A549 (cell line): ENCODE measurements at regions of chr2 and their contacts with region 1.

Region 1: GRCh38 chr2:180980106-180980942 is at the start of gene UBE2E3:
- DNase-seq: peak; percentile 63 to 77
- ATAC-seq: peak; percentile 92 to 95
- H3K4me3 ChIP-seq: peak within 1 kb of the TSS; percentile 91
- H3K27ac ChIP-seq: peak within 1 kb of the TSS; percentile 93 to 94
- H3K4me1 ChIP-seq: peaks cover 30% of the 10 kb centered on the region
- CTCF ChIP-seq: peak; percentile 75
- EP300 ChIP-seq: no peak
- POLR2A ChIP-seq: peak; percentile 42
- RAD21 ChIP-seq: peak; percentile 41 to 62
- polyA plus RNA-seq, gene UBE2E3: 70.6 and 104 TPM in 2 replicates

Region 2: DNA sequence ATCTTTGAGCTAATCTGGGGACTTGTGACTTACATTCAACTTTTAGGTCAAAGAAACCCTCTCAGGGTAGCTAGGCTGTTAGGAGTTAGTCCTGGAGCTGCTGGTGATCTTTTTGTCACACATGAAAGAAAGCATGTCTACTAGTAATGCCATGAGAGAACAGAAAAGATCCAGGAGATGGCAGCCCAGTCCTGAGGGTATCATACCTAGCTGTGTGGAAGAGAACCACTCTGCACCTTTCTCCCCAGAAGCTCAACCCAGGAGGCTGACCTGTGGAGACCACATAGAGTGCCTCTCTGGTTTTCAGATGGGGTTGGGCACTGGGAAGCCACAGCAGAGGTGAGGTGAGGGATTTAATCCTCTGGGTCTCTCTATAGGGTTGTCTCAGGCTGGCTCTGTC is 460.1 kb before region 1 on chr2:
- CTCF ChIA-PET with region 1: interaction called, 8 read pairs
- POLR2A ChIA-PET with region 1: interaction called, 10 read pairs
- DNase-seq: peak in 1 of 2 experiments; percentile 22
- ATAC-seq: peak; percentile 72 to 78; a peak in 5 of 6 replicates
- H3K4me3 ChIP-seq: no peak overlapping the region
- H3K27ac ChIP-seq: peak overlapping the region in 1 of 2 experiments; percentile 62; a peak in 3 of 6 replicates
- H3K4me1 ChIP-seq: peaks cover 48% of the 10 kb centered on the region
- CTCF ChIP-seq: 0 out of 3 replicates have a peak, but pooled peaks have one; percentile 16
- EP300 ChIP-seq: no peak
- POLR2A ChIP-seq: no peak
- RAD21 ChIP-seq: peak in 1 of 2 experiments; percentile 41

Region 3: DNA sequence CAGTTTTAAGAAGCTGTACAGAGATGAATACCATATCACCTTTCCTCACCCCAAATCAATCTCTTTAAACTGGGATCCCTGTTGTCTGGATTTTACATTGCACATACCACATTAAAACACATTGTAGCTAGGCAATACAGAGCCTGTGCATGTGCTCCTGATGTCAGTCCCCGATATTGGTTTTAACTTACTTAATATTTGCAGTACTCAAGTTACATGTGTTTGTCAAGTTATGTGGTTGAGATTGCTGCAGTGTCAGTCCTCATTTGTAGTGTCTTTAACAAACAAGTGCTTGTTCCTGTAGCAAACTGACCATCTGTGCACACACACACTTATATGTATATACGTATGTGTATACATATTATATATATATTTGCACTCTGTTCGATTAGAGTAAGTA is 10.3 kb before region 1 on chr2:
- CTCF ChIA-PET with region 1: interaction called, 16 read pairs
- POLR2A ChIA-PET with region 1: interaction called, 4 read pairs
- DNase-seq: no peak
- ATAC-seq: no peak
- H3K4me3 ChIP-seq: no peak overlapping the region
- H3K27ac ChIP-seq: no peak overlapping the region
- H3K4me1 ChIP-seq: no peaks in the 10 kb centered on the region
- CTCF ChIP-seq: no peak
- EP300 ChIP-seq: no peak
- POLR2A ChIP-seq: no peak
- RAD21 ChIP-seq: no peak

Region 4: GRCh38 chr2:181058378-181059269 is 78.3 kb after region 1 on chr2:
- CTCF ChIA-PET with region 1: interaction called, 13 read pairs
- POLR2A ChIA-PET with region 1: no interaction called
- DNase-seq: peak in 1 of 2 experiments; percentile 49
- ATAC-seq: peak in 1 of 2 experiments; percentile 54; a peak in 3 of 6 replicates
- H3K4me3 ChIP-seq: no peak overlapping the region
- H3K27ac ChIP-seq: no peak overlapping the region
- H3K4me1 ChIP-seq: no peaks in the 10 kb centered on the region
- CTCF ChIP-seq: peak; percentile 84
- EP300 ChIP-seq: no peak
- POLR2A ChIP-seq: no peak
- RAD21 ChIP-seq: peak; percentile 82